Right ventricle myocardium inferior (tissue), 1 donor: ENCODE measurements at regions of chr2 and their contacts with region 1.

Region 1: GRCh38 chr2:74507145-74507925 is at the start of gene PCGF1:
- DNase-seq: peak; percentile 99
- ATAC-seq: peak; percentile 96
- total RNA-seq, gene PCGF1: 26.7 TPM

Region 2: GRCh38 chr2:74529357-74530238 is 22.3 kb after region 1 on chr2 and contains the starts of genes AUP1 and HTRA2:
- intact Hi-C with region 1: loop called (anchors 2 kb)
- DNase-seq: peak; percentile 99
- ATAC-seq: peak; percentile 97
- total RNA-seq, gene AUP1: 53.7 TPM
- total RNA-seq, gene HTRA2: 29.2 TPM

Region 3: GRCh38 chr2:74587664-74588277 is 80.4 kb after region 1 on chr2:
- intact Hi-C with region 1: loop called (anchors 5 kb)
- DNase-seq: peak; percentile 64
- ATAC-seq: peak; percentile 87

Region 4: DNA sequence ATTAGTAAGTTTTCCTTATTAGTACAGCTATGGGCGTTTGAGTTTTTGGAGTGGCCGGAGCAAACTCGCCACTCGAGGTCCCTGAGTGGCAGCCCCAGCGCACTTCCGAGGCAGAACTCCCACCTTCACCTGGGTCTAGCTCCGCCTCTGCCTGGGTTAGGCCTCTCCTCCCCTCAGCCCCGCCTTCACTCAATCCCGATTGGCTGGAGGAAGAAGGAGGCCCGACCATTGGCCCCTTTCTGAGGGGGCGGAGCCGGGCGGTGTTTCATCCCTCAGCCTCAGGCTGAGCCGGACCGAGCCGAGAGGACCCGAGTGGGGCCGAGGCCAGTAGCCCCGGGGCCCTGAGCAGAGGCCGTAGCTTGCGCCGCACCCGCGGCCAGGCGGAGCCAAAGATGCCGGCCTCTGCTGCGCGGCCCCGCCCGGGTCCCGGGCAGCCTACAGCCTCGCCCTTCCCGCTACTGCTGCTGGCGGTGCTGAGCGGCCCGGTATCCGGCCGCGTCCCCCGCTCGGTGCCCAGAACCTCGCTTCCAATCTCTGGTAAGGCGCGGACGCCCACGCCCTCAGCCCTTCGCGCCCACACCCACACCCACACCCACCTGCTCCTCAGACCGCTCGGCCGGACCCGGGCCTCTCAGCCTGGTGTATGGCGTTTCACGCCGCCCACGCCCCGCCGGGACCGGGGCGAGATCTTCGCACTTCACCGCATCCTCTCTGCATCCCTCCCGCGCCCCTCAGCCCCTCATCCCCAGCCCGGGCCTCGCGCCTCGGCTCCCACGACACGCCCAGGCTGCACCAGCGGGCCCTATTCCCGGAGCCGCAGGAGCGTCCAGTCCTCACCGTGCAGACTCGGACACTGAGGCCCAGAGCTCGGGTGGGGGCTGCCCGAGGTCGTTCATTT is 146.9 kb after region 1 on chr2 and contains the start of gene SEMA4F:
- intact Hi-C with region 1: loop called (anchors 10 kb)
- DNase-seq: peak; percentile 97
- ATAC-seq: peak; percentile 99
- total RNA-seq, gene SEMA4F: 3.7 TPM

Region 5: GRCh38 chr2:75021657-75022056 is 514.3 kb after region 1 on chr2:
- intact Hi-C with region 1: no loop called
- DNase-seq: no peak
- ATAC-seq: peak; percentile 82